Ascending aorta (tissue), 2 donors: ENCODE measurements at regions of chr5 and their contacts with region 1.

Region 1: DNA sequence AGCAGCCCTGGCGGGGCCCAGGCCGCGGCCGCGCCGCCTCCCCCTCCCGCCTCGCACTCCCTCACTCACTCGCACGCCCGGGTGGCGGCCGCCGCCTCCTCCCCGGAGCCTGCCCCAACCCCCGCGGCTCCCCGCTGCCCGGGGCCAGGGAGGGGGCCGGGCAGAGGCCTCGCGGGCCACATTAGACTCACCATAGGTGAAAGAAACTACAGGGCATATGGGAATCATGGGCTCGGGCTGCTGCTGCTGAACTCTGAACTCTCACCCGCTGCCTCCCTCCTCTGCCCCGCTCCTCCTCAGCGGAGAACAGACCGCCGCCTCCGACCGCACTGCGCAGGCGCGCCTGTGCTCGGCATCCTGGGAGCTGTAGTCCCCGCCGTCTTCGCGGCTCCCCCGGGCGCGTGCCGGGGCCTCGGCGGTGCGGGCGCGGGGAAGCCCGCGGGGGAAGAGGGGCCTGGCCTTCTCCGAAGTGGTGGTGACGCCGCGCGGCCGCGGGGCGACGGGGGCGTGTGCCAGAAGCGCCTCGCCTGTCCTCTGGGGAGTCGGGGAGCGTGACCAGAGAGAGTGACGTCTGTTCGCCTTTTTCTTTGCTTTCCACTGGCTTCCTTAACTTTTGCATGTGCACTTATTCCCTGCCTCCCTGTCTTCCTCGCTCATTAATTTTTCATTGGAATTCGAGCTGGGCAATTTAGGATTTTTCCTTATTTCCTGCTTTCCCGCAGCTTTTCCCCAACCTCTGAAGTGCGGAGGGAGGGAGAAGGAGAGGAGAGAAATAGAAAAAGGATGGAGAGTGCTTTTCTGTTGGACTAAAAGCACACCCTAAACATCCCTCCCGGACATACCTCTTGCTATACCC is at the start of gene ZFR:
- DNase-seq: peak; percentile 61 to 94
- H3K4me3 ChIP-seq: peak within 1 kb of the TSS; percentile 82 to 92
- H3K27ac ChIP-seq: peak within 1 kb of the TSS; percentile 96 to 97
- H3K4me1 ChIP-seq: peaks cover 3 to 21% of the 10 kb centered on the region in 2 donors
- H3K27me3 ChIP-seq: no peaks in the 10 kb centered on the region
- CTCF ChIP-seq: no peak
- total RNA-seq, gene ZFR: 25.8 TPM

Region 2: GRCh38 chr5:32241034-32241783 is 203.4 kb before region 1 on chr5:
- intact Hi-C with region 1: no loop called
- DNase-seq: no peak
- H3K4me3 ChIP-seq: no peak overlapping the region
- H3K27ac ChIP-seq: no peak overlapping the region
- H3K4me1 ChIP-seq: no peaks in the 10 kb centered on the region
- H3K27me3 ChIP-seq: no peaks in the 10 kb centered on the region
- CTCF ChIP-seq: no peak

Region 3: GRCh38 chr5:32312647-32313523 is 131.8 kb before region 1 on chr5 and contains the start of gene MTMR12:
- intact Hi-C with region 1: loop called (anchors 5 kb)
- DNase-seq: peak; percentile 99 to 100
- H3K4me3 ChIP-seq: peak within 1 kb of the TSS; percentile 80 to 95
- H3K27ac ChIP-seq: peak within 1 kb of the TSS; percentile 94 to 95
- H3K4me1 ChIP-seq: peaks cover 6 to 14% of the 10 kb centered on the region in 2 donors
- H3K27me3 ChIP-seq: no peaks in the 10 kb centered on the region
- CTCF ChIP-seq: no peak
- total RNA-seq, gene MTMR12: 19.5 TPM